Caco-2 (cell line): ENCODE measurements at regions of chr20 and their contacts with region 1.

Region 1: DNA sequence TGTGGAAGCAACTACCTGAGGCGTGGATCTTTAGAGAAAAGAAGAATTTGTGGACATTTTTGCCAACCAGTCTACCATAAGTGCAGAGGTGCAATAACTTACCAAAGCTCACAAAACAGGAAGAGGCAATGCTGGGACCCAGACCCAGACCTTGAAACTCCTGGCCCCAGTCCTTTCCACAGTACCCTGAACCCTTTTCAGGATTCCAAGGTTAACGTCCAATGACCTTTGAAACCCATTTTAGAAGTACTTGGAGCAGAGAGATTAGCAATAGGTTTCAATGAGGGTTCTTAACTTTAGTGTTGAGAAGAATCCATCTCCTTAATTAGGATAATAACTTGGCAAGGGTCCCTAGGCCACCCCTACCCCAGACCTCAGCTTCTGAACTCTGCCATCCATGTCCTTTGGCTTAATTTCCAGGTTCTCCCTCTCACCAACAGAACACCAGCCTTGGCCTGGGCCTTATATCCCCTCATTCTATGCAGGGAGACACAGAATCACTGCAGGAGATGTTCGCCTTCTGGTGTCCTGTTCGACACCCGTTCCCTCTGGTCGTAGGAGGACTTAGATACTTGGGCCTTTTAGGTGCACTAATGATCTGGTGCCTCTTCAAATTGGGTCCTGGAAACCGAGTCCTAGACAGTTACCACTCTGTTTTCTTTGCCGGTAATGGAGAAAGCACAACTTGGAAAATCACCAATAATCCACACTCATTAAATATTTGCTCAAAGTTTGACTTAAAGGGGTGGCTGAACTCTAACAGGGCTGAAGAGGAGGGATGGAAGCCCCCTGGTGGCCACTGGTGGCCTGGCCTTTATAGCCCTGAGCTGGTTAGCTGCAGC is 40.6 kb downstream of the ISM1 start:
- DNase-seq: peak; percentile 76 to 83
- H3K4me3 ChIP-seq: no peak overlapping the region
- H3K4me3 Mint-ChIP-seq: no peak overlapping the region
- H3K27ac Mint-ChIP-seq: peak overlapping the region; percentile 69
- H3K4me1 ChIP-seq: peaks cover 23% of the 10 kb centered on the region
- H3K4me1 Mint-ChIP-seq: peaks cover 18% of the 10 kb centered on the region
- H3K27me3 ChIP-seq: no peaks in the 10 kb centered on the region
- H3K27me3 Mint-ChIP-seq: no peaks in the 10 kb centered on the region
- CTCF ChIP-seq: peak; percentile 74 to 76

Region 2: GRCh38 chr20:12970372-12970821 is 291.3 kb before region 1 on chr20:
- CTCF ChIA-PET with region 1: interaction called, 3 read pairs
- POLR2A ChIA-PET with region 1: no interaction called
- intact Hi-C with region 1: loop called (anchors 2 kb)
- DNase-seq: peak in 1 of 2 experiments; percentile 55
- H3K4me3 ChIP-seq: no peak overlapping the region
- H3K4me3 Mint-ChIP-seq: no peak overlapping the region
- H3K27ac Mint-ChIP-seq: no peak overlapping the region
- H3K4me1 ChIP-seq: peaks cover 4% of the 10 kb centered on the region; the same call in 1 of the 2 replicates
- H3K4me1 Mint-ChIP-seq: peaks cover 7% of the 10 kb centered on the region
- H3K27me3 ChIP-seq: no peaks in the 10 kb centered on the region
- H3K27me3 Mint-ChIP-seq: no peaks in the 10 kb centered on the region
- CTCF ChIP-seq: peak; percentile 52 to 61

Region 3: GRCh38 chr20:13173197-13173596 is 88.5 kb before region 1 on chr20:
- CTCF ChIA-PET with region 1: no interaction called
- POLR2A ChIA-PET with region 1: no interaction called
- intact Hi-C with region 1: loop called (anchors 2 kb)
- DNase-seq: peak; percentile 49 to 76
- H3K4me3 ChIP-seq: no peak overlapping the region
- H3K4me3 Mint-ChIP-seq: no peak overlapping the region
- H3K27ac Mint-ChIP-seq: no peak overlapping the region
- H3K4me1 ChIP-seq: peaks cover 8% of the 10 kb centered on the region
- H3K4me1 Mint-ChIP-seq: peaks cover 9% of the 10 kb centered on the region
- H3K27me3 ChIP-seq: no peaks in the 10 kb centered on the region
- H3K27me3 Mint-ChIP-seq: no peaks in the 10 kb centered on the region
- CTCF ChIP-seq: no peak

Region 4: DNA sequence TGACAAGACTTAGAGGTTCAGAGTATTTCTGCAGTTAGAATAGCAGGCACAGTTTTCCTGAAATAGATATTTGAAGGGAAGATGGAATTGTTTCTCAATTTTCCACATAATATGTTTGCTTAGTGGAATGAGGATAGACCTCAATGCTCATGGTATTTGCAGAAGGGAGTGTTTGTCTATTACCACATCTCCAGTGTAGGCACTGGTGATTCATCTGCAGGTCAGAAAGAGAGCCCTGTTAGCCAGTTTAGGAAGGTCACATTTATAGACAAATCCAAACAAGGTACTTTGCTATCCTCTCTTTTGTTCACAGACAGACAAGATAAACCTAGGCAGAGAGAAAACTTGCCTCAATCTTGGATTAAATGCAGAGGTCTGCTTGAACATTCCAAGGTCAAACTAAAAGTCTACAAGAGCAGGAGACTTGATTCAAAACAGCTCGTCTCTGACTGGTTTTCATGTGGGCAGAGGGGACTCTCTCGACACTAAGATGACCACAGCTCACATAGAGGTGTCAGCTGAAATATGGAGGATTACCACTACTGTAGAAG is 17.8 kb before region 1 on chr20:
- CTCF ChIA-PET with region 1: interaction called, 7 read pairs
- POLR2A ChIA-PET with region 1: no interaction called
- intact Hi-C with region 1: loop called (anchors 1 kb)
- DNase-seq: peak in 1 of 2 experiments; percentile 61
- H3K4me3 ChIP-seq: no peak overlapping the region
- H3K4me3 Mint-ChIP-seq: no peak overlapping the region
- H3K27ac Mint-ChIP-seq: no peak overlapping the region
- H3K4me1 ChIP-seq: peaks cover 32% of the 10 kb centered on the region
- H3K4me1 Mint-ChIP-seq: peaks cover 21% of the 10 kb centered on the region
- H3K27me3 ChIP-seq: no peaks in the 10 kb centered on the region
- H3K27me3 Mint-ChIP-seq: no peaks in the 10 kb centered on the region
- CTCF ChIP-seq: no peak

Region 5: DNA sequence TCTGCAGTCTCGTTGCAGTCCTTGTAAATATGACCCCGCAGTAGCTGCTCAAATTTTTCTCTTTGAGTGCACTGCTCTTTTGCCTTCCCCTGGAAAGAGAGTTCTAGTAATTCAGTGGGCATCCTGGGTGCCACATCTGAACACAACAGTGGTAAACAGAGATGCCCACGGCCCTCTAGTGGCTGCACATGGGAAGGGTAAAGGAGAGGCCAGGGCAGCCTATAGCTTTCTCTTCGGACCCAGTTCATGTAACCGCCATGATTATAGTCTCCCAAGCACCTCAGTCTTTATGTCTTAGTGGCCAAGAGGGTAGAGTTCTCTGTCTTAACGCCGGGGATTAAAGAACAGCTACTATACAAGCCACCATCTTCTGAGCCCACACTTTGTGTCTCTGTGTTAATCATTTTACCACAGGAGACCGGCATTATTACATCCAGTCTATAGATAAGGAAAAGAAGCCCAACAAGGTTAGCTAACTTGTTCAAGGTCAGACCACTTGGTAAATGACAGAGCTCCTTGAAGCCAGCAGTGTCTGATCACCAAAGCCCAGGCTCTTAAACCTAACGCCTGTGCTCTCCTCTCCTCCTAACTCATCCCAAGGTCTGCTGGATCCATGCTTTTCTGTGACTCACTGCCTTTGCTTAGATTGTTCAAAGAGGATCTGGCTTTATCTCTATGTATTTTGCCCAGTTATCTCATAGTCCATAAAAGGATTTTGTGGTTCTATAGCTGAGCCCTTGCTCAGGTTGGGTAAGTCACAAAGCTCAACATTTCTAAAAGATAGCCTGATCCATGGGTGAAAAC is 41.2 kb after region 1 on chr20:
- CTCF ChIA-PET with region 1: interaction called, 3 read pairs
- POLR2A ChIA-PET with region 1: no interaction called
- intact Hi-C with region 1: loop called (anchors 1 kb)
- DNase-seq: peak; percentile 62 to 71
- H3K4me3 ChIP-seq: no peak overlapping the region
- H3K4me3 Mint-ChIP-seq: peak overlapping the region; percentile 42
- H3K27ac Mint-ChIP-seq: peak overlapping the region; percentile 89
- H3K4me1 ChIP-seq: peaks cover 32% of the 10 kb centered on the region
- H3K4me1 Mint-ChIP-seq: peaks cover 18% of the 10 kb centered on the region
- H3K27me3 ChIP-seq: no peaks in the 10 kb centered on the region
- H3K27me3 Mint-ChIP-seq: no peaks in the 10 kb centered on the region
- CTCF ChIP-seq: peak; percentile 56 to 66